ENCODE measurements at regions of chr12 and their contacts with region 1.

Region 1: GRCh38 chr12:7806863-7807487 is 17.8 kb downstream of the NANOG start:
- DNase-seq: peak; percentile 53
- ATAC-seq: peak; percentile 88
- H3K4me3 ChIP-seq: no peak overlapping the region
- H3K27ac ChIP-seq: no peak overlapping the region
- H3K4me1 ChIP-seq: no peaks in the 10 kb centered on the region
- H3K27me3 ChIP-seq: no peaks in the 10 kb centered on the region; the same call in 1 of the 2 replicates
- CTCF ChIP-seq: peak; percentile 83

Region 2: DNA sequence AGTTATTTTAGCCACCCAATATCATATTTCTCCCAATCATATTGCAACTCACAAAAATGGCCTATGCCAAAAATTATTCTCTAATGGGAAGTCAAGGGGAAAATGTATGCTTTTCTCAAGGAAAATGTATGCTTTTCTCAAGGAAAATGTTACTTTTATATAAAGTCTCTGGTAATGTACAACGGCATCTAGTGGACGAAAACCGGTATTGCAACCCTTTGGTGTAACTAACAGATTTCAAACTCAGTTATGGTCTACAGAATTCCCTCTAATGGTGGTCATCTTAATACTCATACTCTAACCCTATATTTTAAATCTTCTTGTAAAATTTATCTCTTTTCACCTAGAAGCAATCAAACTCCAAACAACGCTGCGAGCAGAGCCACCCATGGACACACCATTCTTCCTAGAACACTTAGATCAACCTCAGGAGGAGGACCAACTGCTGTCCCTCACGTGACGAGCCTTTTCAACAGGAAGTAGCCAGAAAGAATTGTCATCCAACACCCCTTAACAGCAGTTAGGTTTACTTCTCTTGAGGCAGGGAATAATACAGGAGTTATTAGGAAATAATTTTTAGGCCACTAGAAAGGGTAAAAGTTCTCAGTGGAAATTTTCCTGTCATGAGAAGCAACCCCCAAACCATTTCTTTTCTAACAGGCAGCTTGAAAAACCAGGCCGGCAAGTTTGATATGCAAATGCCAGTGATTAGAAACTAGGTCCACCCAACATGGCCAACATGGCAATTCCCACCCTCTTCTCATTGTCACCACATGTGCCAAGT is 161.4 kb before region 1 on chr12:
- CTCF ChIA-PET with region 1: interaction called, 3 read pairs
- POLR2A ChIA-PET with region 1: interaction called, 3 read pairs
- in situ Hi-C with region 1: no loop called
- intact Hi-C with region 1: loop called (anchors 10 kb)
- DNase-seq: no peak
- ATAC-seq: no peak
- H3K4me3 ChIP-seq: no peak overlapping the region
- H3K27ac ChIP-seq: no peak overlapping the region
- H3K4me1 ChIP-seq: no peaks in the 10 kb centered on the region
- H3K27me3 ChIP-seq: no peaks in the 10 kb centered on the region
- CTCF ChIP-seq: peak; percentile 79

Region 3: GRCh38 chr12:7678738-7679137 is 128.2 kb before region 1 on chr12:
- CTCF ChIA-PET with region 1: interaction called, 8 read pairs
- POLR2A ChIA-PET with region 1: no interaction called
- in situ Hi-C with region 1: no loop called
- intact Hi-C with region 1: loop called (anchors 2 kb)
- DNase-seq: no peak
- ATAC-seq: no peak
- H3K4me3 ChIP-seq: no peak overlapping the region
- H3K27ac ChIP-seq: no peak overlapping the region
- H3K4me1 ChIP-seq: no peaks in the 10 kb centered on the region
- H3K27me3 ChIP-seq: no peaks in the 10 kb centered on the region
- CTCF ChIP-seq: no peak